OCI-LY7 (cell line): ENCODE measurements at regions of chr17 and their contacts with region 1.

Region 1: DNA sequence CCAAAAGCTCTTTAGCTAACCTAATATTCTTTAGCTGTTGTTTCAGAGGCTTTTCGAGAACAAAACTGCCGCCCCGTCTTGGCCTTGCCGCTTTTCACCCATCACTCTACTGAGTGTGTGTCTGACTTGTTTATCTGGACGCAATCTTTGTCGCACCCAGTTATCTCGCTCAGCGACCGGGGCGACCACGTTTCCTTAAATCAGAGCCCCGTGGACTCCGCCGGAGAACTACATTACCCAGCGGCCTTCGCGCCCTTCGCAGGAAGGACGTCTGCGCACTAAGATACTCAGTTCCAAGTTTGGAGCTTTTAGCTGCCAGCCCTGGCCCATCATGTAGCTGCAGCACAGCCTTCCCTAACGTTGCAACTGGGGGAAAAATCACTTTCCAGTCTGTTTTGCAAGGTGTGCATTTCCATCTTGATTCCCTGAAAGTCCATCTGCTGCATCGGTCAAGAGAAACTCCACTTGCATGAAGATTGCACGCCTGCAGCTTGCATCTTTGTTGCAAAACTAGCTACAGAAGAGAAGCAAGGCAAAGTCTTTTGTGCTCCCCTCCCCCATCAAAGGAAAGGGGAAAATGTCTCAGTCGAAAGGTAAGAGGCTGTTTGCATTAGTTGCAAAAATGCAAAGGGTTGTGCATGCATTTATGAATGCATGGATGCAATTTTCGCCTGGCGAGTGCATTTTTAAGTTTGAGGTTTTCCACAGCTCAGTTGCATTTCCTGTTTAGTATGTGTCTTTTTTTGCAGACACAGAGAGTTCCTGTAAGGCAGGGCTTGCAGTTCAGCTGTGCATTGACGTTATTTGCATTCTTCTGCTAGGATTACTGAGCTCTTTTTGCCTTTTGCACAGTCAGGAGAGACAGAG is at the start of gene MAP2K6:
- DNase-seq: peak; percentile 91
- H3K4me3 ChIP-seq: peak within 1 kb of the TSS; percentile 73
- H3K27ac ChIP-seq: peak within 1 kb of the TSS; percentile 68
- H3K4me1 ChIP-seq: peaks cover 36% of the 10 kb centered on the region
- CTCF ChIP-seq: no peak
- total RNA-seq, gene MAP2K6: 8.4 and 10.3 TPM in 2 replicates

Region 2: GRCh38 chr17:69327060-69327831 is 87.4 kb before region 1 on chr17 and contains the start of gene ABCA5:
- CTCF ChIA-PET with region 1: no interaction called
- POLR2A ChIA-PET with region 1: interaction called, 12 read pairs
- intact Hi-C with region 1: loop called (anchors 5 kb)
- DNase-seq: peak; percentile 98
- H3K4me3 ChIP-seq: peak within 1 kb of the TSS; percentile 73
- H3K27ac ChIP-seq: no peak within 1 kb of the TSS
- H3K4me1 ChIP-seq: peaks cover 16% of the 10 kb centered on the region
- CTCF ChIP-seq: no peak
- total RNA-seq, gene ABCA5: 14.7 and 15.1 TPM in 2 replicates

Region 3: DNA sequence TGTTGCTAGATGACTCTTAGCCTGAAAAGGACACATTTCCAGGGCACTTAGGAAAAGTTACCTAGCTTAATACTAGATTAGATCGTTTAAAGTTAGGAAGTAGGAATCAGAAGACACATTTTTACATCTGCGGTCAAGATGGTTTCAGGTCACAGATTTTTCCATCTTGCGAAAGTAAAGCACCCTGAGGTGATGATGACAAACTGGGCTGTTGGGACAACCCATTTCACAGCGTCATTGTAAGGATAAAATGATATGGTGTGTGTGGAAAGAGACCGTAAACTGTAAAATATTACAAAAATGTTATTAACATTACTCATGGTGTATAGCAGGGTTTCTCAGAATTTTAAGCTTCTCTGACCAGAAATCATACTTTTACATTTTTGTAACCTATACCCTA is 10.3 kb before region 1 on chr17:
- CTCF ChIA-PET with region 1: interaction called, 4 read pairs
- POLR2A ChIA-PET with region 1: interaction called, 10 read pairs
- intact Hi-C with region 1: no loop called
- DNase-seq: no peak
- H3K4me3 ChIP-seq: no peak overlapping the region
- H3K27ac ChIP-seq: no peak overlapping the region
- H3K4me1 ChIP-seq: no peaks in the 10 kb centered on the region
- CTCF ChIP-seq: no peak

Region 4: GRCh38 chr17:69430488-69430887 is 15.8 kb after region 1 on chr17:
- CTCF ChIA-PET with region 1: interaction called, 4 read pairs
- POLR2A ChIA-PET with region 1: interaction called, 15 read pairs
- intact Hi-C with region 1: no loop called
- DNase-seq: no peak
- H3K4me3 ChIP-seq: no peak overlapping the region
- H3K27ac ChIP-seq: no peak overlapping the region
- H3K4me1 ChIP-seq: peaks cover 10% of the 10 kb centered on the region
- CTCF ChIP-seq: no peak

Region 5: DNA sequence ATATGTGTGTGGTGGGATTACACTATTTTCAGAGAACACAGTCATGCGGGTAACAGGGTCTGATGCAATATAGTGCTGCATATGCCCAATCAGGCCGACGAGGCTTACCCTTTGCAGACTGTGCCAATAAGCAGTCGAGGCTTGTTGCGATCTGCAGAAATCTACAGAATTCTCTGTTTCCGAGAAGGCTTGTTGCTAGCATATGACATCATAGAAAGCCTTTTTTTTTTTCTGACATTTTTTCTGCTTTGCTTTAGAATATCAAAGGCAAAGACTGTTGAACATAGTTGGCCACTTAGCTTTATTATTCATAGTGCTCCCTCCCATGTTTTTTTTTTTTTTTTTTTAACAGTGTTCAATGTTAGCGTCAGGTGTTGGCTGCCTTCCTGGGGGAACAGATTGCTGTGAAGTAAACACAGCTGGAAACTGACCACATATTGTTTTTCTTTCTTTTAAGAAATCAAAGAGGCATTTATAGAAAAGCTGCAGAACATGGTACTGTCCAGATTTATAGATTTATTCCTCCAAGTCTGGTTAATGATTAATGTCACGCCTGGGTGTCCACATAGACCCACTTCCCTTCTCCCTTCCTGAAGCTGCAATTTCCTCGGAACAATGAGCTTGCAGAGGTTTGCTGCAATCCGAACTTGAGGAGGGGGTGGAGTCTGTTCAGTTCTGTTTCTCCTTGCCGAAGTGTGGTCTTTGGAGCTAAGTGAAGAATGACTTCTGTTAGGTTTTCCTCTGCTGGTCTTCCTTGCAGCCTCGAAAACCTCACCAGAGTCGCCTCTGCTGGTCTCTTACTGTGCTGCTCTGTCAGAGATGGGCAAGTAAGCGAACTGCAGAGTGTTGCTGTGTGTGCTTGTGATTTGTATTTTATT is 87.2 kb after region 1 on chr17:
- CTCF ChIA-PET with region 1: interaction called, 3 read pairs
- POLR2A ChIA-PET with region 1: interaction called, 49 read pairs
- intact Hi-C with region 1: loop called (anchors 2 kb)
- DNase-seq: peak; percentile 61
- H3K4me3 ChIP-seq: peak overlapping the region; percentile 50
- H3K27ac ChIP-seq: peak overlapping the region; percentile 67
- H3K4me1 ChIP-seq: peaks cover 55% of the 10 kb centered on the region
- CTCF ChIP-seq: no peak

Region 6: GRCh38 chr17:69575346-69575761 is 160.7 kb after region 1 on chr17:
- CTCF ChIA-PET with region 1: no interaction called
- POLR2A ChIA-PET with region 1: interaction called, 7 read pairs
- intact Hi-C with region 1: loop called (anchors 1 kb)
- DNase-seq: peak; percentile 59
- H3K4me3 ChIP-seq: peak overlapping the region; percentile 7
- H3K27ac ChIP-seq: peak overlapping the region; percentile 94
- H3K4me1 ChIP-seq: peaks cover 94% of the 10 kb centered on the region
- CTCF ChIP-seq: no peak

Region 7: DNA sequence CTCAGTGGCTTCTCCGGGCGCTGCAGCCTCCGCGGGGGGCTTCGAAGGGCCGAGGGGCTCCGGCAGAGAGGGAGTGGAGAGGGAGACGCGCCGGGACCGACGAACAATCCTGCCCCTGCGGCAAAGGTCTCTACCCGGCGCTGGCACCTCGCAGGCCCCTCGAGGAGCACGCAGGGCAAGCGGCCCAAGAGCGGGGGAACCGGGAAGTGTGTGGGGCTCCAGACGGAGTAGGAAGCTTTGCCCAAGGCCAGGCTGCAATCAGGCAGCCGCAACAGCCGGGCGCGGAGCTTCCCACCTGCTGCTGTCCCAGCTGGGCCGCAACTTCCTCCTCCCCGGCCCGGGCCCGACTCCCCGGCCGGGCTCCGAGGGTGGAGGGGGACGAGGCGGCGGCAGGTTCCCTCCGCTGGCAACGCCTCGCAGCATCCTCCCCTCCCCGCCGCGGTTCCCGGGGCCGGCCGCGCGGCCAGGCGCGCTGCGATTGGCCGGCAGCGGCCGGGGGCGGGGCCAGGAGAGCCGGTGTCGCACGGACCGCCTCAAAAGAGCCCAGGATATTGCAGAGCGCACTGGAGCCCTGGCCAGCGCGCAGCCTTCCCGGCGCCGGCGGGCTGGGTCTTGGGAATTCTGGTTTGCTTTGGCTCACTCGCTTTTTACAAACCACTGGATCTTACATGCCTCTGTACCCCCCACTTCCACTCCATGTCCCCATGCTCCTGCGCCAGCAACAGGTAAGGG is 754.5 kb after region 1 on chr17 and contains the start of gene KCNJ2:
- CTCF ChIA-PET with region 1: no interaction called
- POLR2A ChIA-PET with region 1: no interaction called
- intact Hi-C with region 1: loop called (anchors 10 kb)
- DNase-seq: peak; percentile 87
- H3K4me3 ChIP-seq: peak within 1 kb of the TSS; percentile 61
- H3K27ac ChIP-seq: no peak within 1 kb of the TSS
- H3K4me1 ChIP-seq: peaks cover 14% of the 10 kb centered on the region
- CTCF ChIP-seq: no peak
- total RNA-seq, gene KCNJ2: 0.46 and 0.88 TPM in 2 replicates